Dendritic cell treated with granulocyte-macrophage colony-stimulating factor and Interleukin-4, amounts not matched to agents 40 ng/mL and 50 ng/mL, for 4 days (primary cell): ENCODE measurements at regions of chr17 and their contacts with region 1.

Region 1: DNA sequence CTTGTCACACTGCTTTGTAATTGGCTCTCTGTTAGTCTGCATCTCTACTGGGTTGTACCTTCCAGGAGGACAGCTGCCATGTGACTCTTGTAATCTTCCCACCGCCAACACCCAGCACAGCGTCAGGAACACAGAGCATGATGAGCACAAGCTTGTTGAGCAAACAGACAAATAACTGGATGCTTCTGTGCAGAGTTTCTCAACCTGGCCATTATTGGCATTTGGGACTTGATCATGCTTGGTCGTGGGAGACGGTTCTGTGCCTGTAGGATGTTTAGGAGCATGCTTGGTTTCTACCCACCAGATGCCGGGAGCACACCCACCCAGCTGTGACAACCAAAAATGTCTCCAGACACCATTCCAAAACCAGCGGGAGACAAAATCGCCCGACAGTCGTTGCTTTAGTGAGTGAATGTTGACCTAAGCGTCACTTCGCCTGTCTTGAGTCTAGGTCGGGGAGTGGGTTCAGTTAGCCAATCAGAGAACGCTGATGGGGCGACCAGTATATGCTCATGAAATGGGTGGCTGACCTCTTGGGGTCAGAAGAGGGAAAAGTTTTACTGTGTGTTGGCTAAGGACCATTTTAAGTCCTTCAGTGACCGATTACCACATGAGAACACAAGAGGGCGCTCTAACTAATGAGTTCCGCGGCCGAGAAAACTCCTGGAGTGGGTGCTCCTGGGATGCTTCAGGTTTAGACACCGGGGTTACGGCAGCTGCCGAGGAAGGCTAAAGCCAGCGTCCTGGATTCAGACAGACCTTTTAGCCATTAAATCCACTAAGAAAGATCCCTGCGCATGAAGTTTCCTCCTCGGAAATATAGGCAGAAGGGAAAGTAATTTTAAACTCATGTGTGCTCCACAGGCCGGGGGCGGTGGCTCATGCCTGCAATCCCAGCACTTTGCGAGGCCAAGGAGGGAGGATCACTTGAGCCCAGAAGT is 57.8 kb upstream of the TEX2 start:
- H3K4me3 Mint-ChIP-seq: peak overlapping the region; percentile 47
- H3K27ac Mint-ChIP-seq: peak overlapping the region; percentile 45
- H3K4me1 Mint-ChIP-seq: peaks cover 58% of the 10 kb centered on the region
- H3K27me3 Mint-ChIP-seq: peaks cover 2% of the 10 kb centered on the region

Region 2: GRCh38 chr17:64297467-64298098 is 23.3 kb before region 1 on chr17:
- intact Hi-C with region 1: no loop called
- H3K4me3 Mint-ChIP-seq: no peak overlapping the region
- H3K27ac Mint-ChIP-seq: no peak overlapping the region
- H3K4me1 Mint-ChIP-seq: peaks cover 10% of the 10 kb centered on the region
- H3K27me3 Mint-ChIP-seq: peaks cover 1% of the 10 kb centered on the region

Region 3: DNA sequence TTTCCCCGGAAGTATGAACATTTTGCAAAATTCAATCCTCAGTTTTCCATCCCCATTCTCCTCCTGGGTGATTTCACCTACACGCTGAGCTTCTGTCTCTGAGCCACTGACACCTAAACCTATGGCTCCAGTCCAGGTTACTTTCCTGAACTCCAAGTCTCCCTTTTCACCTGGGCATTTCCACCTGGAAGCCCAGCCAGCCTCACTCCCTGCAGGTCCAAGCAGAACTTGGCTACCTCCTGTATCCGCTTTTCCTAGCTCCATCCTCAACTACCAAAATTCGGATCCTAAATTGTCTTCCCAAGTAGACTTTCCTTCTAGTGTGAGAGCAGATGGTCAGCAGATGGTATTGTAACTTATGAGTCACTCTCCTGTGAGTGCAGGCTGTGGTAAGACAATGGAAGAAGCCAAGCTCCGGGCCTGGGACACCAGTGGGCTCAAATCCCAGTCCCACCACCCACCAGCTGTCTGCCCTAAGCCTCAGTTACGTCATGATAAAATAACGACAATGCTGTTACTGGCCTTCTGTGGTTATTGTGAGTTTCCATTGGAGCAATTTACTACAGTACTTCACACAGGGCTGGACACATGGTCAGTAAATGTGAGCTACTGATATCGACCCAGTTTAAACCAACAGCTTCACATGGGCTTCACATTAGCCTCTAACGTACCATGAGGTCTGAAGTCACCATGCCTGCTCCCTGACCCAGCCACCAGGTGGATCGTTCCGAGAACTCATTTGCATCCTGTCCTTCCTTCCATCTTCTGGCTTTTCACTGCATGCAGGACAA is 36.5 kb after region 1 on chr17:
- intact Hi-C with region 1: loop called (anchors 5 kb)
- H3K4me3 Mint-ChIP-seq: no peak overlapping the region
- H3K27ac Mint-ChIP-seq: peak overlapping the region; percentile 14
- H3K4me1 Mint-ChIP-seq: peaks cover 27% of the 10 kb centered on the region
- H3K27me3 Mint-ChIP-seq: no peaks in the 10 kb centered on the region

Region 4: GRCh38 chr17:64496786-64497564 is 176.1 kb after region 1 on chr17 and contains the start of gene POLG2:
- intact Hi-C with region 1: loop called (anchors 10 kb)
- H3K4me3 Mint-ChIP-seq: peak within 1 kb of the TSS; percentile 90
- H3K27ac Mint-ChIP-seq: peak within 1 kb of the TSS; percentile 92
- H3K4me1 Mint-ChIP-seq: peaks cover 72% of the 10 kb centered on the region
- H3K27me3 Mint-ChIP-seq: no peaks in the 10 kb centered on the region